ENCODE measurements at regions of chr13 and their contacts with region 1.

Region 1: DNA sequence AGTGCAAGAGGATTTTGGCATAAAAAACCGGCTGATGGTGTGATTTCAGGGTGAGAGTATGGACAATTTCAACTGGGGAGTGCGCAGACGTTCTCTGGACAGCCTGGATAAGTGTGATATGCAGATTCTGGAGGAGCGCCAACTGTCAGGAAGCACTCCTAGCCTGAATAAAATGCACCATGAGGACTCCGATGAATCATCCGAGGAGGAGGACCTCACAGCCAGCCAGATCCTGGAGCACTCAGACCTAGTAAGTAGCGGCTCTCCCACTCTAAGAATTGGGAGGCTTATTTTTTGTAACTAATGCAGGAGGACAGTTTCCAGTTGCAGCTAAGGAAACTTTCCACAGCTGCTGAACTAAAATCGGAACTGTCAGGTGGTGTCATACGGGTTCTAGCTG is 53.6 kb downstream of the ZAR1L start:
- DNase-seq: peak; percentile 43 to 88
- H3K4me3 ChIP-seq: no peak overlapping the region
- H3K27ac ChIP-seq: peak overlapping the region; percentile 61 to 69
- H3K4me1 ChIP-seq: peaks cover 4 to 23% of the 10 kb centered on the region in 2 donors
- H3K27me3 ChIP-seq: no peaks in the 10 kb centered on the region
- CTCF ChIP-seq: no peak

Region 2: DNA sequence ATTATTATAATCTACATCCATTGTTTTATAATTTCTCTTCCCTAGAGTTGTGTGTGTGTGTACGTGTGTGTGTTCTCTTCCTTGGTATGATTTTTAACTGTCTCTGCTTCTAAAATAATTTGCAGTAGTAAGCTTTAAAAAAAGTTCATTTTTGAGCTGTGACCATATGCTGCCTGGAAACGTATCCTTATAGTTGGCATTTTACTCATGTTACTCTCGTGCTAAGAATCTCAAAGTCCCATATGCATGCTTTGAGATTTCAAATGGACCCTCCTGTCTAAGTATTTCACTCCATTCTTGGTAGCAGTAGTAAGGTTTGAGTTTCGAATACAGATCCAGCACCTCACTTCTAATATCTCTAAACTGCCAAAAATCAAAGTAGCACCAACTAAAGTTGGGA is 412.4 kb before region 1 on chr13:
- intact Hi-C with region 1: no loop called
- DNase-seq: no peak
- H3K4me3 ChIP-seq: no peak overlapping the region
- H3K27ac ChIP-seq: no peak overlapping the region
- H3K4me1 ChIP-seq: peaks cover 0 to 2% of the 10 kb centered on the region in 2 donors
- H3K27me3 ChIP-seq: no peaks in the 10 kb centered on the region
- CTCF ChIP-seq: no peak

Region 3: DNA sequence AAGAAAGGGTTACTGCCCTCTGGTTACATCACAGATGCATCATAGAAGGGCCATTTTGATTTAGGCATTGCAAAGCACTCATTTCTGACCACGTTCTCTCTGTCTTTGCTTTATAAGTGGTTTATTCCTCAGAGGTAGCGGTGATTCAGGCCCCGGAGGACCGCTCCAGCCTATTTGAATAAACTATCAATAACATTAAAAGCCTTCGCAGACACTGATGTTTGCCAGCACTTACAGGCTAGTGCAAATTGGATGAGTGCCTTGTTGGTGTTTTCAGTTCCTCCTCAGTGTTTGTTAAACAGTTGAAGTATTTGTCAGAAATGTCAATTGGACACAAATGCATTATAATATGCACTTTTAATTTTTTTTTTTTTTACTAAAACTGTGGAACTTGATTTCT is 402.0 kb before region 1 on chr13:
- intact Hi-C with region 1: no loop called
- DNase-seq: no peak
- H3K4me3 ChIP-seq: peak overlapping the region in 1 of 2 donors; percentile 43
- H3K27ac ChIP-seq: peak overlapping the region; percentile 80 to 83
- H3K4me1 ChIP-seq: peaks cover 0 to 6% of the 10 kb centered on the region in 2 donors
- H3K27me3 ChIP-seq: no peaks in the 10 kb centered on the region
- CTCF ChIP-seq: no peak

Region 4: GRCh38 chr13:32284927-32285632 is 23.5 kb after region 1 on chr13:
- intact Hi-C with region 1: loop called (anchors 2 kb)
- DNase-seq: peak in 1 of 2 donors; percentile 75
- H3K4me3 ChIP-seq: no peak overlapping the region
- H3K27ac ChIP-seq: peak overlapping the region; percentile 77 to 79
- H3K4me1 ChIP-seq: peaks cover 8 to 9% of the 10 kb centered on the region in 2 donors
- H3K27me3 ChIP-seq: no peaks in the 10 kb centered on the region
- CTCF ChIP-seq: no peak